PC-3 (cell line): ENCODE measurements at regions of chr14 and their contacts with region 1.

Region 1: GRCh38 chr14:26598081-26598795 is 405 bp upstream of the NOVA1 start:
- DNase-seq: peak; percentile 77
- ATAC-seq: peak; percentile 82
- H3K4me3 ChIP-seq: peak overlapping the region; percentile 86
- H3K27ac ChIP-seq: no peak overlapping the region
- H3K4me1 ChIP-seq: no peaks in the 10 kb centered on the region
- H3K27me3 ChIP-seq: peaks cover 43% of the 10 kb centered on the region
- CTCF ChIP-seq: no peak

Region 2: GRCh38 chr14:26319139-26319864 is 278.9 kb before region 1 on chr14:
- CTCF ChIA-PET with region 1: no interaction called
- POLR2A ChIA-PET with region 1: no interaction called
- intact Hi-C with region 1: loop called (anchors 5 kb)
- DNase-seq: peak; percentile 64
- ATAC-seq: peak; percentile 99
- H3K4me3 ChIP-seq: no peak overlapping the region
- H3K27ac ChIP-seq: no peak overlapping the region
- H3K4me1 ChIP-seq: no peaks in the 10 kb centered on the region
- H3K27me3 ChIP-seq: no peaks in the 10 kb centered on the region
- CTCF ChIP-seq: no peak

Region 3: GRCh38 chr14:26410189-26410685 is 188.0 kb before region 1 on chr14:
- CTCF ChIA-PET with region 1: no interaction called
- POLR2A ChIA-PET with region 1: no interaction called
- intact Hi-C with region 1: loop called (anchors 2 kb)
- DNase-seq: peak; percentile 63
- ATAC-seq: peak; percentile 91
- H3K4me3 ChIP-seq: no peak overlapping the region
- H3K27ac ChIP-seq: peak overlapping the region; percentile 61
- H3K4me1 ChIP-seq: peaks cover 4% of the 10 kb centered on the region; the same call in 1 of the 2 replicates
- H3K27me3 ChIP-seq: no peaks in the 10 kb centered on the region
- CTCF ChIP-seq: no peak

Region 4: GRCh38 chr14:26444822-26445221 is 153.4 kb before region 1 on chr14:
- CTCF ChIA-PET with region 1: no interaction called
- POLR2A ChIA-PET with region 1: no interaction called
- intact Hi-C with region 1: no loop called
- DNase-seq: peak; percentile 52
- ATAC-seq: no peak
- H3K4me3 ChIP-seq: no peak overlapping the region
- H3K27ac ChIP-seq: no peak overlapping the region
- H3K4me1 ChIP-seq: no peaks in the 10 kb centered on the region
- H3K27me3 ChIP-seq: no peaks in the 10 kb centered on the region
- CTCF ChIP-seq: no peak

Region 5: GRCh38 chr14:26687301-26687837 is 89.1 kb after region 1 on chr14:
- CTCF ChIA-PET with region 1: no interaction called
- POLR2A ChIA-PET with region 1: no interaction called
- intact Hi-C with region 1: loop called (anchors 5 kb)
- DNase-seq: no peak
- ATAC-seq: no peak
- H3K4me3 ChIP-seq: no peak overlapping the region
- H3K27ac ChIP-seq: no peak overlapping the region
- H3K4me1 ChIP-seq: no peaks in the 10 kb centered on the region
- H3K27me3 ChIP-seq: no peaks in the 10 kb centered on the region
- CTCF ChIP-seq: no peak

Region 6: GRCh38 chr14:26765768-26766520 is 167.7 kb after region 1 on chr14:
- CTCF ChIA-PET with region 1: no interaction called
- POLR2A ChIA-PET with region 1: no interaction called
- intact Hi-C with region 1: no loop called
- DNase-seq: peak; percentile 74
- ATAC-seq: peak; percentile 67
- H3K4me3 ChIP-seq: no peak overlapping the region
- H3K27ac ChIP-seq: peak overlapping the region; percentile 62
- H3K4me1 ChIP-seq: peaks cover 17% of the 10 kb centered on the region
- H3K27me3 ChIP-seq: no peaks in the 10 kb centered on the region
- CTCF ChIP-seq: no peak

Region 7: DNA sequence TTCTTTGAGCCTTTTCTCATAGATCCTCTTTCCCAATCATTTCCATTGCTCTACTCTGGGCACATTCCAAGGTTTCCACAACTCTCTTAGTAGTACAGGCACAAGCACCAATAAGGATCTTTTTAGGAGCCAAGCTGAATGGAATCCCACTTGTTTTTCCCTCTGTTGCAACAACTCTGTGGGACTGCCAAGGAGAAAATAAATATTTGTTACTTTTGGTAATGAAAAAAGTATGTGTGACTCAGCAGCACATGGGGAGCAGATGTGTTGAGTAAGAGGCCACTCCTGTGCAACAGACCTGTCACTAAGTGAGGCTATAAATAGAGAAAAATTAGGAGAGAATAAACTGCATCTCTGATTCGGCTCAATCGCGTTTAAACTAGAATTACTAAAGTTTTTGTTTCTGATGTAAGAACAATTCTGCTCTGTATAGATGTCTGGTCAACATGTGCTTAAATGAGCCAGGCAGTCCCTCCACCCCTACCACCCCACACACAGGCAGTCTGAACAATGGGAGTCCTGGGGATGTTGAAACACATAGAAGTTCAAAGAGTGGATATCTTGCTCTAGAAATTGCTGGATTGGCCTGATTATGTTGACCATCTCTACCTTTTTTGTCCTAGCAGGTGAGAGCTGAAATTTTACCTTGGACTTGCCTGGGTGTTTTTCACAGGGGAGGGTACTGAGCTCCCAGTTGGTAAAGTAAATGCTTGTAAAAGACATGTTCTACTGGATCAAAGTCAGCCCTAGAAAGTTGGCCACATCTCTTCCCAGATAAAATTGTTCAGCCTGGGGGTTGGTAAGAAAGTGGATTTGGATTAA is 243.9 kb after region 1 on chr14:
- CTCF ChIA-PET with region 1: no interaction called
- POLR2A ChIA-PET with region 1: no interaction called
- intact Hi-C with region 1: loop called (anchors 5 kb)
- DNase-seq: peak; percentile 98
- ATAC-seq: peak; percentile 92
- H3K4me3 ChIP-seq: peak overlapping the region; percentile 36; the same call in 1 of the 2 replicates
- H3K27ac ChIP-seq: peak overlapping the region; percentile 92
- H3K4me1 ChIP-seq: peaks cover 38% of the 10 kb centered on the region
- H3K27me3 ChIP-seq: no peaks in the 10 kb centered on the region
- CTCF ChIP-seq: no peak